ENCODE measurements at regions of chr20 and their contacts with region 1.

Region 1: DNA sequence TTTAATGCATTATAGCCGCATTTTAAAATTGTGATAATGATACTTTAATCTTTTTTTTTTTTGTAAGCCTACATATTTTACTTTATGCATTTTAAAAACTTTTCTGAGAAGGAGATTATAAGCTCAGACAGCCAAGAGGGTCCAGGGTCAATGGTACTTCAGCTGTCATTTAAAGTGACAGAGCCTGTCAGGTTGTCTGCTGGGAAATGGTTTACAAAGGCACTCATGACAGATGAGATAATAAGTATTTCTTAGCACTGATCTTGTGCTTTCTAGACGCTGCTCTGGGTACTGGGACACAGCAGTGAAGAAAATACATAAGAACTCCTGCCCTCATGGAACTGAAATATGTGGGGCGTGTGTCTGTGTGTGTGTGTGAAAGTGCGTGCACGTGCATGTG is 19.6 kb downstream of the LAMP5 start:
- DNase-seq: no peak
- ATAC-seq: no peak

Region 2: DNA sequence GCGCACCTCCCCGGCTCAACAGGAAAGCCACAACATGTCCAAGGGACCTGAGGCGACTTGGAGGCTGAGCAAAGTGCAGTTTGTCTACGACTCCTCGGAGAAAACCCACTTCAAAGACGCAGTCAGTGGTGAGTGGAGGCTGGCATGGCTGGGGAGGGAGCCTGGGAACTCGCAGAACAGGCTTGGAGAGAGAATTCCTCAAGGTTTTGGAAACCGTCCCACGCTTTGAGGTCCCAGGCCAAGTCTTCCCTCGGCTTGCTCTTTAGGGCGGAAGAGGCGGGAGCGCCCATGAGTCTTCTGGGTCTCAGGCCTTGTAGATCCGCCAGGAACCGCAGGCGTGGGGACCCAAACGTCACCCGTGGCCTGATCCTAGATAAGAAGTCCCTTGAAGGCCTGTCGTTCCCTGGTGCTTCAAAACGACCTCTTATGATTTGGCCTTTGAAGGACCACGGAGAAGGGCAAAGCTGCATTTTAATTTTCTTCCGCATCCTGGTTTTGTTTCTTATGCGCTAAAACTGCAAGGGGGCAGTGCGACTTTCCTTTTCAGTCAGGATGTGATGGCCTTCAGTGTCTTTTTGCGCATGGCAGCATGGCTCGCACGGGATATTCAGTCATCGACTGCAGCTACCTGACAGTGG is 17.7 kb before region 1 on chr20:
- intact Hi-C with region 1: loop called in 1 of 2 experiments (anchors 2 kb)
- DNase-seq: no peak
- ATAC-seq: peak in 1 of 2 donors; percentile 30

Region 3: DNA sequence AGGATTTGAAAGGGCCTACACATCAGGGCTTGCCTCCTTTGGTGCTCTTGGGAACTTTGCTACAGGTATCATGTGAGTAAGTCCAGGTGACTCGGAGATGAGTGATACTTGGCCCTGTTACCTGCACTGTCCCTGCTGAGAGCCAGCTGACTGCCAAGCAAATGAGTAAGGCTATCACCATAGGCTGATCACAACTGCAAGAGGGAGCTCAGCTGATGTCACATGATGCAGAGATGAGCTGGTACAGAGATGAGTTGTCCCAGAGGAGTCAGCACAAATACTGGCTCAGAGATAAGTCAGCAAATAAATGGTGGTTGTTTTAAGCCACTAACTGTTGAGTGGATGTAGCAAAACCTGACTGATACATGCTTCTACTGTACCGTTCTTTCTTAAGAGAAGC is 21.8 kb after region 1 on chr20:
- intact Hi-C with region 1: no loop called
- DNase-seq: no peak
- ATAC-seq: no peak

Measured in left cardiac atrium (tissue), 4 donors.